Posterior vena cava (tissue), 2 donors: ENCODE measurements at regions of chr3 and their contacts with region 1.

Region 1: GRCh38 chr3:69422751-69423150 is 36.9 kb upstream of the FRMD4B start:
- DNase-seq: no peak

Region 2: GRCh38 chr3:69400683-69401082 is 22.1 kb before region 1 on chr3:
- intact Hi-C with region 1: loop called in 1 of 2 experiments (anchors 1 kb)
- DNase-seq: no peak